ENCODE measurements at regions of chr1 and their contacts with region 1.

Region 1: DNA sequence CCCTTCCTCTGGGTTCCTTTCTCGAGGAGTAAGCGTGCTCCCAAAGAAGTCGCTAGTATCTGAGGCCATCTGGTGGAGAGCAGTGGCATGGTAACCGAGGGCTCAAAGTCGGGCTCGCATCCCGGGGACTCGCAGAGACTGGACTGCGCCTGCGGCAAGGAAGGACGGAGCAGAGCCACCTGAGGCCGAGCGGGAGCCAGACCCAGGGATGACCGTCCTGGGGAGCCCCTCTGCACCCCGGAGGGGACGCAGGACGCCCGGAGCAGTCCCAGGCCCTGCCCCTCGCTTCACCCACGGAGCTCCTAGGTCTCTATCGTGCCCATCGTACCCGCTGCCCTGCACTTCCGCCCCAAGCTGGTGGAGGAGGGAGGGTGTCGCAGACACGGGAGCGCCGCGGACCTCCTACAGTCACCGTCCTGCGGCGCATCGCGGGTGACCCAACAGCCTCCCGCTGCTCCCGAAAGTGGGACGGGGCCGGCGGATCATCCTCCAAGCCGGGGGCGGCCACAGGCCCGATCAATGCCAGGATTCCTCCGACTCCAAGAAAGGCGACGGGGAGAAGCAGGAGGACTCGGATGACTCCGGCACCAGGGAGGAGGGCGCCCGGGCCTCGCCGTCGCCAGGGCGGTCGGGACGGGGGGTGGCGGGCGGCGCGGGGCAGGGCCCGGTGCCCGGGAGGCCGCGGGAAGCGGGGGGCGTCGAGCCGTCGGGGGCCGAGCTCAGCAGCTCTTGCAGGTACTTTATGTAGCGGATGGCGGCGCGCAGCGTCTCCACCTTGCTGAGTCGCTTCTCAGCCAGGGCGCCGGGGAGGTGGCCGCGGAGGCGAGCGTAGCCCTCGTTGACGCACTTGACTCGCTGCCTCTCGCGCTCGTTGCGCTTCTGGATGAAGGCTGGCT is 2.3 kb upstream of the CACNA1S start:
- DNase-seq: peak; percentile 87
- CTCF ChIP-seq: peak; percentile 86

Region 2: GRCh38 chr1:201080135-201080534 is 34.3 kb before region 1 on chr1:
- CTCF ChIA-PET with region 1: interaction called, 59 read pairs
- POLR2A ChIA-PET with region 1: no interaction called
- DNase-seq: no peak
- CTCF ChIP-seq: no peak

Region 3: DNA sequence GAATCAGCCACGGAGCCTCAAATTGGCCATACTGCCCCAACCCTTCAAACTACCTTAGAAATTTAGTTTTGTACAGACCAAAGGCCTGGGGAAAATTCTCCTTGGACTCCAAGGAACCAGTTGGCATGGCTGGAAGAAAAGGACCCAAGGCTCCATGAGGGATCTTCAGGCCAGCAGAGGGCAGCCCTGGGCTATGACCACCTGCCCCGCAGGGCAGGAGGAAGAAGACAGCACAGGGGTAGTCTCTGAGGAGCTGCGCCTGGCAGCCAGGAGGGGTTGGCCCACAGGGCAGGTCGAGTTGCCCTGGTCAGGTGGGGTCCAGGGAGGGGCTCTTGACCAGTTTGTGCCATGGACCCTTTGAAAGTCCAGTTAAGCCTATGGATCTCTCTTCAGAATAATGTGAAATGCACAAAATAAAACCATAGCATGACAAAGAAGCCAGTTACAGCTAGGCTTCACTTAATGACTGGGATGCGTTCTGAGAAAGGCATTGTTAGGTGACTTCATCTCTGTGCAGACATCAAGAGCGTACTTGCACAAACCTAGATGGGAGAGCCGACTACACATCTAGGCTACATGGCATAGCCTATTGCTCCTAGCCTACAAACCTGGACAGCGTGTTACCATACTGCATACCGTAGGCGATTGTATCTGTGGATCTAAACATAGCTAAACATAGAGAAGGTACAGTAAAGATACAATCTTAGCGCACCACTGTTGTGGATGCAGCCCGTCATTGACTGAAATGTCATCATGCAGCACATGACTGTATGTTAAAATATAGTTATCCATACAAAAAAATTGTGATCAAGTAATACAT is 28.4 kb before region 1 on chr1:
- CTCF ChIA-PET with region 1: interaction called, 59 read pairs
- POLR2A ChIA-PET with region 1: no interaction called
- DNase-seq: peak; percentile 73
- CTCF ChIP-seq: peak; percentile 67

Region 4: DNA sequence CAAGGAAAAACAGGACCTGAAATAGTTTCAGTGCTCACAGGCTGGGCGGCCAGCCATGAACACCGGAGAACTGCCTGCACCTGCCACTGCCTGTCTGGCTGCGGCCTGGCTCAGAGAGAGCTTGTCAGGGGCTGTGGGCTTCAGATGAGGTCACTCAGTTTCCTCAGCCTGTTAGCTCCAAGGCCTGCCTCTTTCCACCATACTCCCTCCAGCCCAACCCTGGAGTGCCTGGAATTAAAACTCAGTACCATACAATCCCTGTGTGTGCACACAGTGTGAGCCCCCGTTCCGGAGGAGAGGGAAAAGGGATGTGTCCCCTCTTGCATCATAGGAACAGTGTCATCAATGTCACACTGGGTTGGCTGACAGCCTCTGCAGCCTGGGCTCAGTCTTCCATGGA is 18.4 kb before region 1 on chr1:
- CTCF ChIA-PET with region 1: interaction called, 20 read pairs
- POLR2A ChIA-PET with region 1: no interaction called
- DNase-seq: peak; percentile 35
- CTCF ChIP-seq: no peak